Heart right ventricle (tissue), 16 donors: ENCODE measurements at regions of chr13 and their contacts with region 1.

Region 1: DNA sequence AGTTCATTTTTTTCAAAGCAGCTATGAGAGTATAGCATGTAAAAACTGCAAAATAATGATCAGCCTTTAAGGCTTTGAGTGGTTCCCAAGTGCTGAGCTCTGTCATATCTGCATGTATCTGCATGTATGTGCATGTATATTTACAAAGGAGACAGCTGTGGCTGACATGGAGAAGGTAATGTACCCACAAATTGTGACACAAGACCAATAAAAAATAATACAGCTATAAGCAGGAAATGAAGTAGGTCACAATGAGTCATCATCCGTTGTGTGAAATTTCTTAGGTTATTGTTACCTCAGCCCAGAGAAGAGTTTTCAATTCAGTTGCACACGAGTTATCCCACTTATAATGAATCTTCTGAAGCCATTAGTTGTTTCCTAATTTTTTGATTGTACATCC is 60.9 kb upstream of the MED4 start:
- DNase-seq: no peak
- ATAC-seq: peak in 6 of 8 donors; percentile 25 to 70 (median 54)
- H3K4me3 ChIP-seq: no peak overlapping the region
- H3K27ac ChIP-seq: peak overlapping the region in 6 of 10 donors; percentile 9 to 83 (median 46)
- H3K4me1 ChIP-seq: peaks cover 0 to 82% (median 11%) of the 10 kb centered on the region in 9 donors
- H3K27me3 ChIP-seq: no peaks in the 10 kb centered on the region
- CTCF ChIP-seq: no peak

Region 2: GRCh38 chr13:48222358-48223301 is 66.8 kb after region 1 on chr13:
- intact Hi-C with region 1: loop called in 2 of 10 experiments (anchors 5 to 10 kb)
- DNase-seq: peak in 1 of 2 donors; percentile 33
- ATAC-seq: peak; percentile 64 to 90 (median 81)
- H3K4me3 ChIP-seq: peak overlapping the region in 9 of 10 donors; percentile 14 to 52 (median 44)
- H3K27ac ChIP-seq: peak overlapping the region; percentile 65 to 90 (median 76)
- H3K4me1 ChIP-seq: peaks cover 0 to 41% (median 19%) of the 10 kb centered on the region in 9 donors
- H3K27me3 ChIP-seq: no peaks in the 10 kb centered on the region
- CTCF ChIP-seq: no peak